MCF 10A (cell line): ENCODE measurements at regions of chr12 and their contacts with region 1.

Region 1: DNA sequence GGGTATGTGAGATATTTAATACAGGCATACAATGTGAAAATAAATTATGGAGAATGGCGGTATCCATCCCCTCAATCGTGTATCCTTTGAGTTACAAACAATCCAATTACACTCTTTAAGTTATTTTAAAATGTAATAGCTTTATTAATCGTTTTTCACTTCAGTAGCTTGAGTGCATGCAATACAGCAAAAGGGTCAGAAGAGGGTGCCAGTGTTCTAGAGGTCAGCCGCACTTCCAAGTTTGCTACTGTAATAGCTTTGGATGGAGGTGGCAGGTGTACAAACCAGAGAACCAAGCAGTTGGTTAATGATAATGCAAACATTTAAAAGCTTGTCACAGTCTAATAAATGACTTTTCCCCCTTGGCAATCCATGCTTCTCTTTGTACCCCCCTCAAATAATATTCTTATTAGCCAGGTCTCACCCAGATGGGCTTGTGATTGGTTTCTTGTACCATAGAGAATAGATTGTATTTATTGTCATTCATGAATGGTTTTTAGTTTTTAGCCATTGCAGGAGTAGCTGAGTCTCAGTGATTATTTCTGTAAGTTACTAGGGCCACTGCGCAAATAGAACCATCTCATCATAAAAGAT is 127.0 kb downstream of the ERC1 start:
- DNase-seq: peak; percentile 77
- H3K4me3 Mint-ChIP-seq: no peak overlapping the region
- H3K27ac Mint-ChIP-seq: no peak overlapping the region
- H3K4me1 Mint-ChIP-seq: peaks cover 12% of the 10 kb centered on the region
- H3K27me3 Mint-ChIP-seq: no peaks in the 10 kb centered on the region
- CTCF ChIP-seq: peak; percentile 86

Region 2: DNA sequence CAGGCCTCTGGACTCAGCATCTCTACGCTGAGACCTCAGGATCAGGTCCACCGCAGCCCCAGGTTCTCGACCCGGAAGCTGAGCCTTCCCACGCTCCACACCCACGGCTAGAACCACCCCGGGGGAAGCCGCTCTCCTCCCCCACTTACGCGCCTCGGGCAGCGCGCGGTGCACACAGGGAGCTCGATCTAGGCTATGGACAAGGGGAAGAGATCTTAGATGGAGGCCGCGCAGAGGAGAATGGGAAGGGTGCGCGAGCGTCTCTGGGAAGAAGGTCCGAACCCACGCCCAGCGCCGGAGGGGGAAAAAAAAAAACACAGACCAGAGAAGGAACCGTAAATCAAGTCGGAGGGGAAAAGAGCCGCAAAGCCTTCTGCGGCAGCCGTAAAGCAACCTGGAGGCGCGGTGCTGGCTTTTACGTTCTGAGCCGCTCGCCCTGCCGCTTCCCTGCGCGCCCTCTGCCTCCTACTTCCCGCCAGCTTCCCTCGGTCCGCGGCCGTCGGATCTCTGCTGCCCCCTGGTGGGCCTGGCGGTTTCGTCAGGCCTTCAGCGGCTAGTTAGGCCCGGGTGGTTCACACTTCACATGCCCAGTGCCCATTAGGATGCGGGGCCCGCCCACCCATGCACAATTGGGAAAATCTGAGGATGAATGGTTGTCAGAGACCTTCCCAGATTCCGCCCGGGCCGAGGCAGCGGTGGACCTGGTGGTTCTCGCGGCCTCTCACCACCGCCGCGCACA is 168.4 kb before region 1 on chr12 and contains the start of gene RAD52:
- CTCF ChIA-PET with region 1: interaction called, 9 read pairs
- POLR2A ChIA-PET with region 1: interaction called, 15 read pairs
- intact Hi-C with region 1: no loop called
- DNase-seq: peak; percentile 98
- H3K4me3 Mint-ChIP-seq: peak within 1 kb of the TSS; percentile 96
- H3K27ac Mint-ChIP-seq: peak within 1 kb of the TSS; percentile 86
- H3K4me1 Mint-ChIP-seq: peaks cover 26% of the 10 kb centered on the region
- H3K27me3 Mint-ChIP-seq: no peaks in the 10 kb centered on the region
- CTCF ChIP-seq: peak; percentile 92
- total RNA-seq, gene RAD52: 26.0 and 27.9 TPM in 2 replicates

Region 3: GRCh38 chr12:1083889-1084262 is 34.2 kb before region 1 on chr12:
- CTCF ChIA-PET with region 1: no interaction called
- POLR2A ChIA-PET with region 1: no interaction called
- intact Hi-C with region 1: no loop called
- DNase-seq: no peak
- H3K4me3 Mint-ChIP-seq: no peak overlapping the region
- H3K27ac Mint-ChIP-seq: no peak overlapping the region
- H3K4me1 Mint-ChIP-seq: no peaks in the 10 kb centered on the region
- H3K27me3 Mint-ChIP-seq: no peaks in the 10 kb centered on the region
- CTCF ChIP-seq: no peak

Region 4: DNA sequence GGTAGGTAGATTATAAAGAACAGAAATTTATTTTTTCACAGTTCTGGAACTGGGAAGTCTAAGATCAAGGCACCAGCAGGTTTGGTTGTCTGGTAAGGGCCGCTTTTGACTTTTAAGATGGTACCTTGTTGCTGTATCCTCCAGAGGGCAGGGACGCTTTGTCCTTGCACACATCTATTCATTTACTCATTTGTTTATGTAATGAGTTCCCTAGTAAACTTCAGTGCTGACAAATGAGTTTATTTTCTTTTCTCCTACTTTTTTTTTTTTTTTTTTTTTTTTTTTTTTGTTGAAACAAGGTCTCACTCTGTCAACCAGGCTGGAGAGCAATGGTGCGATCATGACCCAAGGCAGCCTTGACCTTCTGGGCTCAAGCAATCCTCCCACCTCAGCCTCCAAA is 280.6 kb after region 1 on chr12:
- CTCF ChIA-PET with region 1: interaction called, 14 read pairs
- POLR2A ChIA-PET with region 1: no interaction called
- intact Hi-C with region 1: no loop called
- DNase-seq: peak; percentile 21
- H3K4me3 Mint-ChIP-seq: no peak overlapping the region
- H3K27ac Mint-ChIP-seq: no peak overlapping the region
- H3K4me1 Mint-ChIP-seq: no peaks in the 10 kb centered on the region
- H3K27me3 Mint-ChIP-seq: no peaks in the 10 kb centered on the region
- CTCF ChIP-seq: no peak

Region 5: GRCh38 chr12:1544996-1545700 is 427.1 kb after region 1 on chr12:
- CTCF ChIA-PET with region 1: interaction called, 24 read pairs
- POLR2A ChIA-PET with region 1: interaction called, 5 read pairs
- intact Hi-C with region 1: loop called (anchors 1 kb)
- DNase-seq: peak; percentile 58
- H3K4me3 Mint-ChIP-seq: no peak overlapping the region
- H3K27ac Mint-ChIP-seq: no peak overlapping the region
- H3K4me1 Mint-ChIP-seq: peaks cover 11% of the 10 kb centered on the region
- H3K27me3 Mint-ChIP-seq: no peaks in the 10 kb centered on the region
- CTCF ChIP-seq: peak; percentile 37

Region 6: GRCh38 chr12:1583421-1584078 is 465.5 kb after region 1 on chr12:
- CTCF ChIA-PET with region 1: interaction called, 143 read pairs
- POLR2A ChIA-PET with region 1: interaction called, 37 read pairs
- intact Hi-C with region 1: loop called (anchors 1 kb)
- DNase-seq: peak; percentile 84
- H3K4me3 Mint-ChIP-seq: no peak overlapping the region
- H3K27ac Mint-ChIP-seq: no peak overlapping the region
- H3K4me1 Mint-ChIP-seq: peaks cover 16% of the 10 kb centered on the region
- H3K27me3 Mint-ChIP-seq: no peaks in the 10 kb centered on the region
- CTCF ChIP-seq: peak; percentile 82

Region 7: GRCh38 chr12:1605129-1606020 is 487.3 kb after region 1 on chr12:
- CTCF ChIA-PET with region 1: interaction called, 15 read pairs
- POLR2A ChIA-PET with region 1: interaction called, 16 read pairs
- intact Hi-C with region 1: no loop called
- DNase-seq: peak; percentile 83
- H3K4me3 Mint-ChIP-seq: peak overlapping the region; percentile 77
- H3K27ac Mint-ChIP-seq: peak overlapping the region; percentile 86
- H3K4me1 Mint-ChIP-seq: peaks cover 26% of the 10 kb centered on the region
- H3K27me3 Mint-ChIP-seq: no peaks in the 10 kb centered on the region
- CTCF ChIP-seq: peak; percentile 78